ENCODE measurements at regions of chr1 and their contacts with region 1.

Region 1: DNA sequence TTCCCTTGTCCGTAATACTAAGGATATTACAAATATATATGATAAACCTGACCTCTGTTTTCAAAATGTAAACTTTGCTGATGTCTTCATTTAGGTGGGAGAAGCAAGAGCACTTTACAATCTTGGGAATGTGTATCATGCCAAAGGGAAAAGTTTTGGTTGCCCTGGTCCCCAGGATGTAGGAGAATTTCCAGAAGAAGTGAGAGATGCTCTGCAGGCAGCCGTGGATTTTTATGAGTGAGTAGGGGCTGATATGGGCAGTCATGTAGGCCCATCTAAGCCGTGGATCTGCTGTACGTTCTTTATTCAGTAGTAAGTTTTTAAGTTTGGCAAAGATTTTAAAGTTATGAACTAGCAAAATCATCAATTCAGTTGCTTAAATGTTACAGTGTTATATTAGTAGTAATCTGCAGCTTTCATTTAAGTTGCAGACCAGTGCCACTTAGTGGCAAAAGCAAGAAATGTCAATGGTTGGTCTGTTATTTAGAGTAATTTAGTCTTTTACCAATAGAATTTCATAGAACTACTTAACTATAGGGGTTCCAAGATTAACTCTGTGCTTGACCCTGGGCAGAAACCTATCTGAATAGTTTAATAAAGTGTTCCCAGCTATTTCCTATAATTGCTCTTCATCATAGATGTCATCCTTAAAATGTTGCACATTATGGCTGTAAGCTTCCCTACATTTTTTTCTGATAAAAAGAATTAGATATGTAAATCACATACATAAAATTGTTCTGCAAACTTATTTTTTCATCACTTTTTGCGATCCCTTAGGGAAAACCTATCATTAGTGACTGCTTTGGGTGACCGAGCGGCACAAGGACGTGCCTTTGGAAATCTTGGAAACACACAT is 21.3 kb downstream of the GPSM2 start:
- DNase-seq: peak; percentile 48
- H3K4me3 ChIP-seq: no peak overlapping the region
- H3K27ac ChIP-seq: no peak overlapping the region
- H3K4me1 ChIP-seq: peaks cover 8% of the 10 kb centered on the region
- H3K27me3 ChIP-seq: no peaks in the 10 kb centered on the region
- CTCF ChIP-seq: peak; percentile 66 to 75

Region 2: DNA sequence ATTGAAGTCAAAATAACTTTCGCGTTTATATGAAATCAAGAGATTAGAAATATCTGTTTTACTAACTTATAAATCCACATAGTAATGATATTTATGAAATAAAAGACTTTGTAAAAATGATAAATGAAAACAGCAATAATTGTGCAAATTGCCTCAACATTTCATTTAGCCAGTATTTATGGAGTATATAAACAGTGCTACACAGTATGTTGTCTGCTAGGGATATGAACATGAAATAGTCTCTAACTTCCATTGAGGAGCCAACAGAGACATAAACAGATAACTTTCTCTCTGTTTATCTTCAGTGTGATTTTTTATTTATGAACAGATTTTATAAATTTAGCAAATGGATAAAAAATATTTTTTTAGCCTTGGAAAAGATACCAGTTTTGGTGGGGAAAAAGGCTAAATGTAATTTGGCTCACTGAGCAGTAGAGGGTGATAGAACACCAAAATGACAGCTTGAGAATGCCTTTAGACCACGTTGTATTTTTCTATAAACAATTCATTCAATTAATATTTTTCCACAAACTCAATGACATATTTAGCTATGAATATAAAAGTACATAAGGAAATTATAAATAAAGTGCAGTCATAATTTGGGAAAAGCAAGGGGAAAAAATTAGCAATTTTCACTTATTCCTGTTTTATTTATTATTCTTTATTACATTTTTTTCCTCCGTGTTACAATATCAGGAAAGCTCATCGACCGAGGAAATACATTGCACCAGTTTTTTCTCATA is 385.7 kb before region 1 on chr1:
- CTCF ChIA-PET with region 1: no interaction called
- dilution Hi-C with region 1: no loop called
- in situ Hi-C with region 1: no loop called
- intact Hi-C with region 1: loop called (anchors 1 kb)
- DNase-seq: no peak
- H3K4me3 ChIP-seq: no peak overlapping the region
- H3K27ac ChIP-seq: no peak overlapping the region
- H3K4me1 ChIP-seq: no peaks in the 10 kb centered on the region
- H3K27me3 ChIP-seq: no peaks in the 10 kb centered on the region
- CTCF ChIP-seq: peak; percentile 68 to 81

Region 3: DNA sequence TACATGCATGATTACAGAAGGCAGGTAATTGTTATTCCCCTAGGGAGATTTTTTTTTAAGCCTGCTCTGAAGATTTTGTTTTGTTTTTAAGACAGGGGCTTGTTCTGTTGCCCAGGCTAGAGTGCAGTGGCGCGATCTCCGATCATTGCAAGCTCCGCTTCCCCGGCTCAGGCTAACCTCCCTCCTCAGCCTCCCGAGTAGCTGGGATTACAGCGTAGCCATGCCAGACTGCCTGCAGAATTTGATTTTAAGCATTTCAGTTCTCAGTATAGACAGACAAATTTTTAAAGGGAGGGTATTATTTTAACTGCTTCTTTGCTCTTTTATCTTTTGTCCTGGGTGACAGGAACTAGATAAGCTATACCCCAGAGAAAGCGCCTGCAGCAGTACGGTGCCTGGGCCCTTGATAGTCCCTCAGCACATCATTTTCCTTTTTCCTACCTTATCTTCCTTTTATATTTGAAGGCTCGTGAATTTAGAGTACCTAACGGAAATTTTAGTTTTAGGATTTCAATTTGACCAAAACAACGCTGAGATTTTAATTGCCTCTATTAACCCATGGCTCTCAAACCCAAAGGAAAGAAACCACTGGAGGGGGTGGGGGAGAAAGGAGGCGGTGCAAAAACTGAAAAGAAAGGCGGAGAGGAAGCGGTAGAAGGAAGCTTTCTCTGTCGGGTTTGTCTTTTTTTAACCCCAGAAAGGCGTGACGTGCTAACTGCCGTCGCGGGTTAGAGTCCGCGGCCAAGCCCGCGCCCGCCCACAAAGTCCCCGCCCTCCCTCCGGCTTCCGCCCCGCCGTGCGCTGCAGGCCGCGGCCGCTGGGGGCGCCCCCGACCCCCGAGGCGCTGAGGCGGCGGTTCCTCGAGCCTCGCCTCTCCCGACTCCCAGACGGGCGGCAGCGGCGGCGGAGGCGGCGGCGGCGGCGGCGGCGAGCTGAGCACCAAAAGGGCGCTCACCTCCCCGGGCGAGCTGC is 338.6 kb before region 1 on chr1 and contains the start of gene EEIG2:
- CTCF ChIA-PET with region 1: no interaction called
- dilution Hi-C with region 1: no loop called
- in situ Hi-C with region 1: no loop called
- intact Hi-C with region 1: loop called (anchors 5 kb)
- DNase-seq: peak; percentile 81
- H3K4me3 ChIP-seq: peak within 1 kb of the TSS; percentile 52 to 57 (median 53)
- H3K27ac ChIP-seq: peak within 1 kb of the TSS; percentile 25
- H3K4me1 ChIP-seq: peaks cover 22% of the 10 kb centered on the region
- H3K27me3 ChIP-seq: no peaks in the 10 kb centered on the region
- CTCF ChIP-seq: peak; percentile 34 to 58
- total RNA-seq, gene EEIG2: 4.5 to 10.0 TPM

Region 4: DNA sequence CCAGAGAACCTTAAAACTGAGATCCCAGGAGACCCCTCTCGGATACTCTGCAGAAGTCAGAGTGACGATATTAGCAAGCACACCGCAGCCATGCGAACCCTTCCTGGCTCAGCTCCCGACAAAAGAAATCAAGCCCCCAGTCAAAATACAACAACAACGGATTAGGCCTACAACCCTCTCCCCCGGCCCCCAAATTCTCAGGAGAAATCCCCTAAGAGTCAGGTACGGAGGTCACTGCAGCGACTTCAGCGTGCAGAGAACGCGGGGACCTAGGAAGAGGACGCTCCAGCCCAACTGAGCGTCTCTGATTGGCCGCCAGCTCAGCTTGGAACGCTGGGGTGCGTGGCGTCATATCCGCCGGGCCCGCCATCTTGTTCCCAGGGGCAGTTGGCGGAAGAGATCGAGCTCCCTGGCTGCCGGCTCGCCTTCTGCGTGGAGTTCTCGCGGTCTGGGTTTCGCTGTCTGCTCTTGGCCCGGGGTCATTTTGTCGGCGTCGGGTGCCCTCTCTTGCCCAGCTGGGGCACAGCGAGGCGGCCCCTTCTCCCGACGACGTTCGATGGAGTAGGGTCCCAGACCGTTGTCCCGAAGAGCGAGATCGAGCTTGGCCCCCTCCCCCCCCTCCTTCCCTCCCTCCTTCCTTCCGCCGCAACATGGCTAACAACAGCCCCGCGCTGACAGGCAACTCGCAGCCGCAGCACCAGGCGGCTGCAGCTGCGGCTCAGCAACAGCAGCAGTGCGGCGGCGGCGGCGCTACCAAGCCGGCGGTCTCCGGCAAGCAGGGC is 206.0 kb before region 1 on chr1 and contains the start of gene PRPF38B:
- CTCF ChIA-PET with region 1: no interaction called
- dilution Hi-C with region 1: no loop called
- in situ Hi-C with region 1: no loop called
- intact Hi-C with region 1: loop called (anchors 1 kb)
- DNase-seq: peak; percentile 88
- H3K4me3 ChIP-seq: peak within 1 kb of the TSS; percentile 87 to 96 (median 94)
- H3K27ac ChIP-seq: peak within 1 kb of the TSS; percentile 75
- H3K4me1 ChIP-seq: no peaks in the 10 kb centered on the region
- H3K27me3 ChIP-seq: no peaks in the 10 kb centered on the region
- CTCF ChIP-seq: no peak
- total RNA-seq, gene PRPF38B: 14.5 to 52.2 TPM

Region 5: GRCh38 chr1:108746372-108747205 is 151.5 kb before region 1 on chr1 and contains the start of gene STXBP3:
- CTCF ChIA-PET with region 1: no interaction called
- dilution Hi-C with region 1: no loop called
- in situ Hi-C with region 1: no loop called
- intact Hi-C with region 1: loop called (anchors 2 kb)
- DNase-seq: peak; percentile 95
- H3K4me3 ChIP-seq: peak within 1 kb of the TSS; percentile 75 to 89 (median 81)
- H3K27ac ChIP-seq: peak within 1 kb of the TSS; percentile 96
- H3K4me1 ChIP-seq: peaks cover 10% of the 10 kb centered on the region
- H3K27me3 ChIP-seq: no peaks in the 10 kb centered on the region
- CTCF ChIP-seq: peak; percentile 90 to 97
- total RNA-seq, gene STXBP3: 41.3 to 46.9 TPM

Region 6: DNA sequence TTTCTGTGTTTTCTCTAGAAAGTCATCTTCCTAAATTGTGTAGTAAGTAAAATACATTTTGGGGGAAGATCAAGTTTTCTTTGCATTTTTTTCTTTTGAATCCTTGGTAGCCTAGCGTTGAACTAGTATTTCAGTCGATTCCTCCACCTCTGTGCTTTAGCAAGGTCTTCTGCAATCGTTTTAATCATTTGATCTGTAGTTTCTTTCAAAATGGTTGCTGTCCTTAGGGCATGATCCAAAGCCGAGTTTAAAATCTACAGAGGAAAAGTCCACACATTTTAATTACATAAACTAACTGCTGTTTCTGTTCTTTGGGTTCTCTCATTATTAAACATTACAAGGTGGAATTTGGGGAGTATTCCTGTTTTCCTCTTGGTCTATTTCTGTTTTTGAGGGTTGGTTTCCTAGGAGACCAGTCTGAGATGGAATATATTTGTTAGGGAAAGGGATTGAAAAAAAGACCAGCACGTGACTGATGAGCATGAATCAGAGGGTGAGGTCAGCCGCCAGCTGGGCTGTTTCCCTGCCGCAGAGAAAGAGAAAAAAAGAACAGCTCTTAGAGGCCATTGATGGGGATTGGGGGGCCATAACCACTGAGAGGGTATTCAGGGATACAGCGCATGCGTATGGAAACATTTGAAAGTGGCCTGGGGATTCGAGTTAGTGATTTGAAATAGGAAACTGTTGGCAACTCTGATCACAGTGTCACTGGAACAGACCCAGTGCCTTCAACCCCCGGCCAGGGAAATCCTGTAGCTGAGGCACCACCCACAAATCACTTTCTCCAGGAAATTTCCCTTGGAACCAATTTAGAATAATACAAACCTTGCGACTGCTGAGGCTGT is 81.8 kb before region 1 on chr1:
- CTCF ChIA-PET with region 1: no interaction called
- dilution Hi-C with region 1: no loop called
- in situ Hi-C with region 1: no loop called
- intact Hi-C with region 1: loop called (anchors 2 kb)
- DNase-seq: peak; percentile 90
- H3K4me3 ChIP-seq: peak overlapping the region; percentile 4 to 29 (median 13)
- H3K27ac ChIP-seq: peak overlapping the region; percentile 99
- H3K4me1 ChIP-seq: peaks cover 21% of the 10 kb centered on the region
- H3K27me3 ChIP-seq: no peaks in the 10 kb centered on the region
- CTCF ChIP-seq: no peak

Region 7: GRCh38 chr1:108828022-108828961 is 69.8 kb before region 1 on chr1:
- CTCF ChIA-PET with region 1: no interaction called
- dilution Hi-C with region 1: no loop called
- in situ Hi-C with region 1: loop called (anchors 5 kb)
- intact Hi-C with region 1: loop called (anchors 1 kb)
- DNase-seq: peak; percentile 96
- H3K4me3 ChIP-seq: peak overlapping the region in 1 of 3 experiments; percentile 1
- H3K27ac ChIP-seq: peak overlapping the region; percentile 90
- H3K4me1 ChIP-seq: peaks cover 34% of the 10 kb centered on the region
- H3K27me3 ChIP-seq: no peaks in the 10 kb centered on the region
- CTCF ChIP-seq: peak; percentile 62 to 80

Region 8: DNA sequence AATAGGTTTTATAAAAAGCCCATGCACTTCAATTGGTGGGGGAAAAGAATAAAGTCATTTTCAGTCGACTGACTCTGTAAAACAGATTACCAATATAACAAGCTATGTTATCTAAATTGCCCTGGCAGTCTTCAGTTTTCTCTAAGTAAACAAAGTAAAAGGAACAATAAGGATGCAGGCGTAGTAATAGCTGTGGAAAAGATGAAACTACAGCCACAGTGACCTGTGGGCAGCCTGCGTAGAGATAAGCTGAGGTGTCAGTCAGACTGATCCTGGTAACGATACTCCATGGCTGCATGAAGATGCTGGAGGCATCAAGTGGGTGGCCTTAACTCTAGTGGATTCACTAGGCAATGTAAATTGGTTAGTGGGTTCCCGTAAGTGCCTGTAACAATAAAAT is 35.9 kb after region 1 on chr1:
- CTCF ChIA-PET with region 1: no interaction called
- dilution Hi-C with region 1: no loop called
- in situ Hi-C with region 1: no loop called
- intact Hi-C with region 1: no loop called
- DNase-seq: no peak
- H3K4me3 ChIP-seq: no peak overlapping the region
- H3K27ac ChIP-seq: no peak overlapping the region
- H3K4me1 ChIP-seq: no peaks in the 10 kb centered on the region
- H3K27me3 ChIP-seq: no peaks in the 10 kb centered on the region
- CTCF ChIP-seq: no peak

Measured in mammary epithelial cell (primary cell).